Activated B cell treated with CpG ODN at 0.5 μM for 24 hours (primary cell): ENCODE measurements at regions of chr21 and their contacts with region 1.

Region 1: GRCh38 chr21:41816220-41817165 is 49.6 kb upstream of the RIPK4 start:
- DNase-seq: peak; percentile 53
- ATAC-seq: peak; percentile 94
- H3K4me3 Mint-ChIP-seq: no peak overlapping the region
- H3K27ac Mint-ChIP-seq: no peak overlapping the region
- H3K4me1 Mint-ChIP-seq: peaks cover 8% of the 10 kb centered on the region
- H3K27me3 Mint-ChIP-seq: no peaks in the 10 kb centered on the region
- CTCF ChIP-seq: no peak

Region 2: GRCh38 chr21:41167348-41168342 is 648.8 kb before region 1 on chr21 and contains the start of gene BACE2:
- CTCF ChIA-PET with region 1: no interaction called
- POLR2A ChIA-PET with region 1: no interaction called
- intact Hi-C with region 1: loop called (anchors 2 kb)
- DNase-seq: peak; percentile 77
- ATAC-seq: peak; percentile 87
- H3K4me3 Mint-ChIP-seq: peak within 1 kb of the TSS; percentile 88
- H3K27ac Mint-ChIP-seq: peak within 1 kb of the TSS; percentile 69
- H3K4me1 Mint-ChIP-seq: peaks cover 26% of the 10 kb centered on the region
- H3K27me3 Mint-ChIP-seq: peaks cover 5% of the 10 kb centered on the region
- CTCF ChIP-seq: no peak
- total RNA-seq, gene BACE2: 13.0 and 17.1 TPM in 2 replicates

Region 3: DNA sequence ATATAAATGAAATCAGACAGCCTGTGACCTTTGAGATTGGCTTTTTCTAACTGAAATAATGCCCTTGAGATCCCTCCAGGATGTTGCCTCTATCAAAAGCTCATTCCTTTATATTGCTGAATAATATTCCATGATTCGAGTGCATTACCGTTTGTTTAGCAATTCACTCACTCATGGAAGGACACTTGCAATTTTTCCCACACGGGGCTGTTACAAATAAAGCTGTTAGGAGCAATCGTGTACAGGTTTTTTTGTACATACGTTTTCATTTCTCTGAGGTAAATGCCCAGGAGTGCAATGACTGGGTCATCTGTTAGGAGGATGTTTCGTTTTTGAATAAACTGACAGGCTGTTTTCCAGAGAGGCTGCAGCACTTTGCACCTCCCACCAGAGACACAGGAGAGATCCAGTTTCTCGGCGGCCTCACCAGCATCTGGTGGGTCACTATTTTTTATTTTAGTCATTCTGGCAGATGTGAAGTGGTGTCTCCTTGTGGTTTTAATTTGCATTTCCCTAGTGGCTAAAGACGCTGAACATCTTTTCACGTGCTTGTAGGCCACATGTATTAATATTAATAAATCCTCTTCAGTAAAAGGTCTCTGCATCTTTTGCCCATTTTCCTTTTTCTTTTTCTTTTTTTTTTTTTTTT is 51.7 kb after region 1 on chr21:
- CTCF ChIA-PET with region 1: interaction called, 4 read pairs
- POLR2A ChIA-PET with region 1: no interaction called
- intact Hi-C with region 1: loop called (anchors 5 kb)
- DNase-seq: no peak
- ATAC-seq: peak; percentile 81
- H3K4me3 Mint-ChIP-seq: peak overlapping the region; percentile 64
- H3K27ac Mint-ChIP-seq: peak overlapping the region; percentile 50
- H3K4me1 Mint-ChIP-seq: peaks cover 64% of the 10 kb centered on the region
- H3K27me3 Mint-ChIP-seq: no peaks in the 10 kb centered on the region
- CTCF ChIP-seq: no peak

Region 4: DNA sequence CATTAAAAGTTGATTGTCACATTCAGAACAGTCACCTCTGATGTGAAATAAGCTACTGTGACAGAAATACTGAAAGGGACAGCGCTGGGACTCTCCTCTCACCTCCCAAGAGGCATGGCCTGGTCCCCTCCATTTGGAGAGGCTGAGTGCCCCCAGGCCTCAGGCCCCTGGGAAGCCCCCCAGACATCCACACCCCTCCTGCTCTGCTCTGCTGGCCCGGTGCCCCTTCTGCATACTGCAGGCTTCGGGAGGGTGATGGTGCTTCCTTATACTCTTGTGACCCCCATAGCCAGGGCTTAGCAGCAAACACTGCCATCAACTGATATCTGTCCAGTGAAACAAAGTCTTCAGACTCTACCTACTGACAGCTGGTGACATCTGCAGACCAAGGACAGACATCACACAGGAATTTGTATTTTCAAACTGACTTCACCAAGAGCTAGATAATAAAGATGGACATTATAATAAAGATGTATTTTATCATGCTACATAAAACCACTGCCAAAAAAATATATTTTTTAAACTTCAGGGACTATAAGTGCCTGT is 100.5 kb after region 1 on chr21:
- CTCF ChIA-PET with region 1: interaction called, 6 read pairs
- POLR2A ChIA-PET with region 1: no interaction called
- intact Hi-C with region 1: loop called (anchors 2 kb)
- DNase-seq: no peak
- ATAC-seq: no peak
- H3K4me3 Mint-ChIP-seq: no peak overlapping the region
- H3K27ac Mint-ChIP-seq: no peak overlapping the region
- H3K4me1 Mint-ChIP-seq: peaks cover 13% of the 10 kb centered on the region
- H3K27me3 Mint-ChIP-seq: no peaks in the 10 kb centered on the region
- CTCF ChIP-seq: no peak

Region 5: DNA sequence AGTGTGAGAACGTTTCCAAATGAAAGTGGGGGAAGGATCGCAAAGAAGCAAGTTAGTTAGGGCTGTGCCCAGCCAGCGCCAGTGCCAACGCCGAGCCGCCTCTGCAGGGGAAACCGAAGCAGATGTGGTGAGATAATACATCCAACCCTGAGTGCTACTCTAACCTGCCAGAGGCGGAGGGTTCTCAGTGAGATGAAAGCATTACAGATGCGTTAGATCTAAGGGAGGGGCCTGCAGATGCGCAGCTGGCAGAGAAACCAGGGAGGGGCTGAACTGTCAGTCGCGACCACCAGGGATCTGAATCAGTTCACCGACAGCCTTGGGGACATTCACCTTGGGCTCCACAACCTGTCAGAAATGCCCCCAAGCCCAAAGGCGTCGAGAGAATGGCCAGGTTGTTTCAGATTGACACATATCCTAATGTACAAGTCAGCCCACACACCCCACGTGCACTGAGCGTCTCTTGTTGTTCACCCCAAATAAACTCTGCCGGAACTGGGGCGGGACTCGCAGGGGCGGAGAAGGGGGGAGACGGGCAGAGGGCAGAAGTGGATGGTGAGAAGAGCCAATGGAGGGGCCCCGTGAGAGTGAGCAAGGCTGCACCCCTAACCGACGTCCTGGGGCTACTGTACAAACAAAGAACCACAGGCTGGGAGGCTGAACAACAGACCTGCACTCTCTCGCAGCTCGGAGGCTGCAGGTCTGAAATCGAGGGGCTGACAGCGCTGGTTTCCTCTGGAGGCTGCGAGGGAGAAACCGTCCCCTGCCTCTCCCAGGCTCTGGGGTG is 245.9 kb after region 1 on chr21:
- CTCF ChIA-PET with region 1: interaction called, 4 read pairs
- POLR2A ChIA-PET with region 1: no interaction called
- intact Hi-C with region 1: loop called (anchors 5 kb)
- DNase-seq: peak; percentile 53
- ATAC-seq: peak; percentile 51
- H3K4me3 Mint-ChIP-seq: peak overlapping the region; percentile 77
- H3K27ac Mint-ChIP-seq: peak overlapping the region; percentile 91
- H3K4me1 Mint-ChIP-seq: peaks cover 85% of the 10 kb centered on the region
- H3K27me3 Mint-ChIP-seq: no peaks in the 10 kb centered on the region
- CTCF ChIP-seq: no peak

Region 6: GRCh38 chr21:42258153-42258884 is 441.8 kb after region 1 on chr21:
- CTCF ChIA-PET with region 1: no interaction called
- POLR2A ChIA-PET with region 1: no interaction called
- intact Hi-C with region 1: loop called (anchors 5 kb)
- DNase-seq: peak; percentile 73
- ATAC-seq: peak; percentile 97
- H3K4me3 Mint-ChIP-seq: peak overlapping the region; percentile 1
- H3K27ac Mint-ChIP-seq: no peak overlapping the region
- H3K4me1 Mint-ChIP-seq: peaks cover 43% of the 10 kb centered on the region
- H3K27me3 Mint-ChIP-seq: no peaks in the 10 kb centered on the region
- CTCF ChIP-seq: peak; percentile 78